Activated CD4-positive, alpha-beta T cell treated with anti-CD3 and anti-CD28 coated beads for 36 hours (primary cell): ENCODE measurements at regions of chr7 and their contacts with region 1.

Region 1: DNA sequence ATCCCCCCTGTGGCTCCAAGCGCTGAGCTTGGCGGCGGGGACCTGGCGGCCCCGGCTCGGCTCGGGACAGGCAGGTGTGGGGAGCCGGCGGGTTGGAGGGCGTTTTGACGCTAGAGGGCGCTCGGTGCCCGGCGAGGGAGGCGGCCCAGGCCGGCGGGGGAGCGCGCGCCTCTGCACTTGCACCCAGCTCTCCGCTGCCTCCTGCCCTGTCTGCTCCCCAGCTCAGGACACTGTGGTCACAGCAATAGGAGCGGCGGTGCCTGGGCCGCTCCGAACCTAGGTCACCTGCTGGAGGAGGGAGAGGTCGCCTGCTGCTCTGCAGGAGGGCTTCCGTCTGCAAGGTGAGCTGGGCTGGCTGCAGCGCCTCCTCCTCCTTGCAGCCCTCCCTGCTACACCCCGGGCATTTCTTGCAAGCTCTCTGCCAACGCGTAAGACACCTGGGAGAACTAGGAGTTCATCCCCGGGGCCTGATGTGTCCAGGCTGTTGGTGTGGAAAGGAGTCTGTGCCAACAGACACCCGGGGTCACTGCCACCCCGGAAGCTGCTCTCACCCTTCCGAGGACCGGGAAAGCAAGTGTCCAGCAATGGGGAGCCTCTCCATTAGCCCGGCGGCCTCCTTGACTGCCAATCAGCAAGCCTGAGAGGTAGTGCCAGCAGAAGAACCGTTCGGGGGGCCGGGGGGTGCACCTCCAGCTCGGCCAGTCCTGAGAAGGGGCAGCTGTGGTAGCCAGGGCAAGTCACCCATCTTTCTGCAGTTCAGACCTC is 620.4 kb downstream of the GALNT17 start:
- DNase-seq: peak; percentile 80
- ATAC-seq: peak; percentile 75
- H3K4me3 Mint-ChIP-seq: no peak overlapping the region
- H3K27ac Mint-ChIP-seq: no peak overlapping the region
- H3K4me1 Mint-ChIP-seq: no peaks in the 10 kb centered on the region
- H3K27me3 Mint-ChIP-seq: peaks cover 12% of the 10 kb centered on the region

Region 2: GRCh38 chr7:71925663-71926062 is 173.3 kb after region 1 on chr7:
- CTCF ChIA-PET with region 1: no interaction called
- POLR2A ChIA-PET with region 1: no interaction called
- intact Hi-C with region 1: no loop called
- DNase-seq: no peak
- ATAC-seq: no peak
- H3K4me3 Mint-ChIP-seq: no peak overlapping the region
- H3K27ac Mint-ChIP-seq: no peak overlapping the region
- H3K4me1 Mint-ChIP-seq: no peaks in the 10 kb centered on the region
- H3K27me3 Mint-ChIP-seq: no peaks in the 10 kb centered on the region

Region 3: DNA sequence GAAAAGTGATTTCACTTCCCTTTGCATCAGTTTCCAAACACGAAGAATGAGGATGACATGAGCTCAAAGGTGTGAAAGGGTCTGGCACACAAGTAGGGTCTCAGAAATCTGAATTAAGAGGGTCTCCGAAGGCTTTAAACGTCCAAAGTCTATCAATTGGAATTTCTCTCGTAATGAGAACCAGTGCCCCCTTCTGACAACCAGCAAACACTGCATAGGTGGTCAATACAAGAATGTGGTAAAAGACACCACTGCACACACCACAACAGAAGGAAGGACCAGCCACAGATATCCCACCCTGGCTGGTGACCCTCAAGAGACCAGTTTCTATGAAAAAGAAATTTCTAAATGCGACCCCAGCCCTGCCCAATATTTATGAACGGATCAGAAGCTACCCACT is 581.7 kb after region 1 on chr7:
- CTCF ChIA-PET with region 1: interaction called, 6 read pairs
- POLR2A ChIA-PET with region 1: no interaction called
- intact Hi-C with region 1: loop called in 1 of 2 experiments (anchors 5 kb)
- DNase-seq: no peak
- ATAC-seq: no peak
- H3K4me3 Mint-ChIP-seq: no peak overlapping the region
- H3K27ac Mint-ChIP-seq: no peak overlapping the region
- H3K4me1 Mint-ChIP-seq: no peaks in the 10 kb centered on the region
- H3K27me3 Mint-ChIP-seq: peaks cover 23% of the 10 kb centered on the region

Region 4: DNA sequence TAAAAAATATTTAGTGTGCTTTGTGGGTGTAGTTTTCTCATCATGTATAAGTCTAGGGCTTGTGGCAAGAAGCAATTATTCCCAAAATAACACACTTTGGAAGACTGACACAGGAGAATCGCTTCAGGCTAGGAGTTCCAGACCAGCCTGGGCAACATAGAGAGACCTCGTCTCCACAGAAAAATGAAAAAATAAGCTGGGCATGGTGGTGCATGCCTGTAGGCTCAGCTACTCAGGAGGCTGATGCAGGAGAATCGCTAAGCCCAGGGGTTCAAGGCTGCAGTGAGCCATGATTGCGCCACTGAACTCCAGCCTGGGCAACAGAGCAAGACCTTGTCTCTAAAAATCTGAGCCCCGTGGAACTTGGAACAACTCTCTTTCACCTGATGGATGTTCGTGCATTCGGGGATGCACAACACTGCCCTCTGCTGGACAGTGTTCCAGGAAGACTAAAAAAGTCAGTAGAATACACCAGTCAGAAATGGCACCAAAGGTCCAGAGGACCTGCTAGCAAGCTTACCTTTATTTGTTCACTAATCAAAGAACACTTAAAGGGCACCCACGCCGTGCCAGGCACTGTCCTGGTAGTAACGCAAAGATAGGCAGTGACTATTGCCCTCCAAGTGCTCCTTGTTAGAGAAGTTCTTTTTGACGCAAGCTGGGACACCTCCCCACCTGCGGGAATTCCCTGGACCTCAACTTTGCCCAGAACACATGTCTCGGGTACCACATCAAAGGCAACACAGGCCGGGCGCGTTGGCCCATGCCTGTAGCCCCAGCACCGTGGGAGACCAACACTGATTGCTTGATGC is 741.7 kb after region 1 on chr7:
- CTCF ChIA-PET with region 1: interaction called, 3 read pairs
- POLR2A ChIA-PET with region 1: no interaction called
- intact Hi-C with region 1: loop called (anchors 1 to 2 kb)
- DNase-seq: peak; percentile 78
- ATAC-seq: no peak
- H3K4me3 Mint-ChIP-seq: no peak overlapping the region
- H3K27ac Mint-ChIP-seq: no peak overlapping the region
- H3K4me1 Mint-ChIP-seq: no peaks in the 10 kb centered on the region
- H3K27me3 Mint-ChIP-seq: peaks cover 4% of the 10 kb centered on the region

Region 5: DNA sequence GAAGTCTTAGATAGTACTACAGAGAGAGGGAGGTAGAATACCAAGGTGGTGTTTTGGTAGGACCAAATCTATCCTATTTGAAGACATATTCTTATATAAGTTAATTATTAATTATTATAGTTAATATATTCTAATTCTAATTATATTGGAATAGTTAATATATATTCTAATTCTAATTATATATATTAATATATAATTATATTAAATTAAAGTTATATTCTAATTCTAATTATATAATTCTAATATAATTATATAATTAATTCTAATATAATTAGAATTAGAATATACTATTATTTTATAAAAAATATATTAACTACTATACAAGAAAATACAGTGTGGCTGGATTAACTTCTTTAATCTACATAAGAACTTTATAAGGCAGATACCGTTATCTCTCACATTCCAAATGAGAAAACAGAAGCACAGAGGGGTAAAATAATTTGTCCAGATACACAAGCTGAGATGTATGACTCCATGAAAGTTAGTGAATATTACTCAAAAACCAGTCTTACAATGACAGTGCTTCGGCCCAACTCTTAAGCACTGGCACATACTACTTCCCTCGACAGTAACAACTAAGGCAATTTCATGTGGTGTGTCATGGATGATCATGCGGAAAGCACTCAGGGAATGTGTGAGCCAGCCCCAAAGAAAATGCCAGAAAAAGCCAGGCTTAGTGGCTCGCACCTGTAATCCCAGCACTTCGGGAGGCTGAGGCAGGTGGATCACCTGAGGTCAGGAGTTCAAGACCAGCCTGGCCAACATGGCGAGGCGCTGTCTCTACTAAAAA is 1033.0 kb after region 1 on chr7:
- CTCF ChIA-PET with region 1: no interaction called
- POLR2A ChIA-PET with region 1: no interaction called
- intact Hi-C with region 1: loop called in 1 of 2 experiments (anchors 5 kb)
- DNase-seq: no peak
- ATAC-seq: no peak
- H3K4me3 Mint-ChIP-seq: no peak overlapping the region
- H3K27ac Mint-ChIP-seq: no peak overlapping the region
- H3K4me1 Mint-ChIP-seq: no peaks in the 10 kb centered on the region
- H3K27me3 Mint-ChIP-seq: no peaks in the 10 kb centered on the region